Activated CD4-positive, alpha-beta T cell treated with anti-CD3 and anti-CD28 coated beads, Interleukin-2, amount 10 ng/mL, durations not matched to agents 24 days and 14 days (primary cell): ENCODE measurements at regions of chr9 and their contacts with region 1.

Region 1: DNA sequence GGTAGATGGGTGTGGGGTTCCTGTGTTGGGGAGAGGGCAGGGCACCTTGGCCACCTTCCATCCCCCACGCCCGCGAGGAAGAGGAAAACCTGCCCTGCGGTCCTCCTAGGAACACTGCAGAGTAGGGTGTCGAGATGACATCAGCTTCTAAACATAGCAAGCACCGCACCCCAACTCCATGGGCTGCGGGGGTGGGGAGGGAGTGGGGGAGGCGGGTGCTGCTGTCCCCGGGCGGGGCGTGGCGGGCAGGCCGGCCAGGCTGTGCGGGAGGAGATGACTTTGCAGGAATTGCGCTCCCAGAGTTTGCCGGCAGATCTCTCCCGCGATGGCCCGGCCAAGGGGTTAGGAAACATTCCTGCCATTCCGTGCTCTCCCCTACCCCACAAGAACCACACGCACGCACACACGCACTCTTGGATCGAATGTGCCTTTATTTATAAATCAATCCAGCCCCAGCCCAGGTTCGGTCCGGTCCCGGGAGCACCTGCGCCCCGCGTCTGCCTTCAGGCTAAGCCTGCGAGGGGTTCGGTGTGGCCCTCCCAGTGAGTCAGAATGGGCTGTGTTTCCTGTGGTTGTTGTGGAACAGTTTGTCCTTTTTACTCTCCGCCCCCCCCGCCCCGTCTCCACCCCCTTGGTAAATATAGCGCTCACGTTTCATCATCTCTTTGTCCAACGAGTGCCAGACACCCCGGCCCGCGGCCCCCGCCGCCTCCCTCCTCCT is 5.2 kb upstream of the KLF9 start:
- DNase-seq: peak; percentile 93
- H3K4me3 Mint-ChIP-seq: peak overlapping the region; percentile 89
- H3K27ac Mint-ChIP-seq: peak overlapping the region; percentile 97
- H3K4me1 Mint-ChIP-seq: peaks cover 46% of the 10 kb centered on the region
- H3K27me3 Mint-ChIP-seq: no peaks in the 10 kb centered on the region

Region 2: GRCh38 chr9:70258692-70259511 is 160.8 kb before region 1 on chr9 and contains the start of gene SMC5:
- intact Hi-C with region 1: loop called (anchors 1 kb)
- DNase-seq: peak; percentile 98
- H3K4me3 Mint-ChIP-seq: peak within 1 kb of the TSS; percentile 91
- H3K27ac Mint-ChIP-seq: peak within 1 kb of the TSS; percentile 85
- H3K4me1 Mint-ChIP-seq: peaks cover 49% of the 10 kb centered on the region
- H3K27me3 Mint-ChIP-seq: peaks cover 11% of the 10 kb centered on the region
- total RNA-seq, gene SMC5: 47.0 and 50.7 TPM in 2 replicates

Region 3: GRCh38 chr9:70340572-70340971 is 79.1 kb before region 1 on chr9:
- intact Hi-C with region 1: no loop called
- DNase-seq: no peak
- H3K4me3 Mint-ChIP-seq: no peak overlapping the region
- H3K27ac Mint-ChIP-seq: no peak overlapping the region
- H3K4me1 Mint-ChIP-seq: peaks cover 4% of the 10 kb centered on the region
- H3K27me3 Mint-ChIP-seq: no peaks in the 10 kb centered on the region

Region 4: GRCh38 chr9:70406434-70406862 is 13.3 kb before region 1 on chr9:
- intact Hi-C with region 1: loop called (anchors 2 kb)
- DNase-seq: peak; percentile 75
- H3K4me3 Mint-ChIP-seq: peak overlapping the region; percentile 79
- H3K27ac Mint-ChIP-seq: peak overlapping the region; percentile 90
- H3K4me1 Mint-ChIP-seq: peaks cover 58% of the 10 kb centered on the region
- H3K27me3 Mint-ChIP-seq: no peaks in the 10 kb centered on the region

Region 5: GRCh38 chr9:70466976-70467561 is 47.4 kb after region 1 on chr9:
- intact Hi-C with region 1: loop called (anchors 1 kb)
- DNase-seq: no peak
- H3K4me3 Mint-ChIP-seq: peak overlapping the region; percentile 14
- H3K27ac Mint-ChIP-seq: peak overlapping the region; percentile 77
- H3K4me1 Mint-ChIP-seq: peaks cover 39% of the 10 kb centered on the region
- H3K27me3 Mint-ChIP-seq: no peaks in the 10 kb centered on the region

Region 6: DNA sequence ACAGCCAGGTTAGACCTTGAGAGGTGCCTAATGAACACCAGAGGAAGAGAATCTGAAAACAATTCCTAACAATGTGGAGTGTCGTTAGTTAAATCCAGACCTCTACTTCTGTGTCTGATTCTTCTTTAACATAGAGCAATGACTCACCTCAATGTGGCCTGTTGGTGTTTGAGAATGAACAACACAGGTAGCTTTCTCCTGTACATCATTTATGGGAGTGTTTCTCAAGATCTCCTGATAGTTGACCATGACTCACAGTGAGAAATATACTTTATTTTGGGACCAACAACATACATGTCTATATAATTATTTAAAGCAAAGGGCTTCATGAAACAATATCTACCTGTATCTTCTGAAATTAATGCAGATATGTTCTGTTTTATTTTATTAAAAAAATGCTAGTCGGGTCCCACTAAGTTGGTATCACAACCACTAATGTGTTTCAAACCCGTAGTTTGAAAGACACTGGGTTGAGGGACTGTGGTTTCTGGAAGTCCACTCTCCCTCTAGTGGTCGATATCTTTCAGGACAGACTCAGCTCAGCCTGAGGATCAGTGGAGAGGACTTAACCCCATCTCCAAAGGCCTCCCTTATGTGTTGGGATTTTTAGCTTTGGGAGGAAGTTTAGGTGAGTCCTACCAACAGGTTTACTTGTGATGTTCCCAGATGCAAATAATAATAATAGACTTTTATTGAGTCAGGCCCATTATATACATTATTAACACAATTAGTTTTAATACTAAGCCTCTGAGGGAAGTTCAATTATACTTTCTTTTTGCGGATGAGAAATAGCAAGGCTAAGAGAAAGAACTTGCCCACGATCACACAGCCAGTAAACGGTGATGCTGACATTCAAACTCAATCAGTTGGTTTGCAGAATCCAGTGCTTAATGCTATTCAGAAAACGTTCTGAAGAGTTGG is 64.8 kb after region 1 on chr9:
- intact Hi-C with region 1: loop called (anchors 5 kb)
- DNase-seq: peak; percentile 60
- H3K4me3 Mint-ChIP-seq: no peak overlapping the region
- H3K27ac Mint-ChIP-seq: no peak overlapping the region
- H3K4me1 Mint-ChIP-seq: peaks cover 5% of the 10 kb centered on the region
- H3K27me3 Mint-ChIP-seq: no peaks in the 10 kb centered on the region

Region 7: DNA sequence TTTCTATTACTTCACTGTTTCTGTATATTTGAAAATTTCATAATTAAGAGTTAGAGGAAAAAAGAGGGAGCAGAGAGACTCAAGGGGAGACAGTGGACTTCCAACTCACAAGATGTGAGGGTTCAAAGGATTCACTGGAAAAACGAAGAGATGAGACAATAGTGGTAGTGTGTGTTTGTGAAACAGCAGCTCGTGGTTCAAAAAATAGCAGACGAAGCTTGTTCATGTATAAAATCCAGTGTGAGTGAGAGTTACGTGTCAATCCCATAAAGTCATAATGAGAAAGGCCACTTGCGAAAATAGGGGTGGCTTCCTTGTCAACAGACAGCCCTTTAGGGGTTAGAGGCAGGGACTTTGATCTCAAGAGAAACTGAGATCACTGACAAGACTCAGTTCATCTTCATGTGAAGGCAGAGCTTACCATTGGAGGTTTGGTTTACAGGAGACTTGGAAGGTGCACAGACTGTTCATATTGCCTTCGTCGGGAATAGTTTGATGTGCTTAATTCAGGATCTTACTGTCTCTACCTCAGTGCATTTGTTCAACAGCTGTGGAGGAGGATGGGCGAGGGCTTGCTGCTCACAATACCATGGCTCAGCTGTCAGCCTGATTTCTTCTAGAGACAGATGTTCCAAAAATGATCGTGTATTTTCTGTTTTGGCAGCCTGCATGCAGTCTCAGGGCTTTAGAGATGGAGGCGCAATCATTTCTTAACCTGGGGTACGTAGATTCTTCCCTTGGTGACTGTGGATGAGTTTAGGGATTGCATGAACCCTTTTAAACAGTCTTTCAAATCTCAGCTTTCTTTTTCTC is 100.4 kb after region 1 on chr9:
- intact Hi-C with region 1: loop called (anchors 1 kb)
- DNase-seq: peak; percentile 67
- H3K4me3 Mint-ChIP-seq: peak overlapping the region; percentile 69
- H3K27ac Mint-ChIP-seq: peak overlapping the region; percentile 85
- H3K4me1 Mint-ChIP-seq: peaks cover 28% of the 10 kb centered on the region
- H3K27me3 Mint-ChIP-seq: no peaks in the 10 kb centered on the region

Region 8: DNA sequence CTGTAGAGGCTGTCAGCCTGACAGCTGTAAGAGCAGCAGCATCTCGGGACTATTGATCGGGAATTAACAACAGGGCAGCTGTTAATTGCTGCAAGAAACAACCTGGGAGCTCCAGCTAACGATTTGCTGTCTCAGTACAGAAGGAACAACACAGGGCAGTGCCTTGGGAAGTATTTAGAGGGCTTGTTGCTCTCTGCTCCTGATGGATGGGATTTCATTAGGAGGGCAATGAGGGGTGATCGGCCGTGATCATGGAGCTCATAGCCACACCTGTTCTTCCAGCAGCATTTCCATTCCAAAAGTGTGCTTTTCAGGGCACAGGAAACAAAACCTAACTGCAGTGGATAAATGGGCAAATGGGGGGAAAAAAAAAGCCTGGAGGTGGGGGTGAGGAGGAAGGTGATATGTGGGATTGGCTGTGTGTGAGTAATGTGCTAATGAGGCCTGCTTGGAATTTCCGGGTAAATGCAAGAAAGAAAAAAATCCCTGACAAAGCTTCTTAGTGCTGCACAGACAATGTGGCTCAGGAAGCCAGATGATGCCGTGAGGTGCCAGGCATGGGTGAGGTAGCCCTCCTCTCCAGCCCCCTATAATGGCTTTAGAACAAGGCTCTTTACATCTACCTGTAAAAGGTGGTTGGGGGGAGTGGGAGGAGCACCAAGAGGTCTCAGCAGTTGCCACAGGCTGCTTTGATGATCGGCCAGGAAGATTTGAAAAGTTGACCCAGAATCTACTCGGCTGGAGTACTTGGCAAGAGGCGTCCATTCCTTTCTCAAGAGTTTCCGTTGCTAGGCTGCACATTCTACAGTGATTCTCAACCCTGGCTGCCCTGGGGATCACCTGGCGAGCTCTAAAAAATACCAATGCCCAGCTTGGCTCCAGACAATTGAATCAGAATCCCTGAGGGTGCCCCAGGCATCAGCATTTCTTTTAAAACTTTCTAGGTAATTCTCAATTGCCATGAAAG is 134.3 kb after region 1 on chr9:
- intact Hi-C with region 1: no loop called
- DNase-seq: no peak
- H3K4me3 Mint-ChIP-seq: no peak overlapping the region
- H3K27ac Mint-ChIP-seq: no peak overlapping the region
- H3K4me1 Mint-ChIP-seq: peaks cover 25% of the 10 kb centered on the region
- H3K27me3 Mint-ChIP-seq: no peaks in the 10 kb centered on the region

Region 9: DNA sequence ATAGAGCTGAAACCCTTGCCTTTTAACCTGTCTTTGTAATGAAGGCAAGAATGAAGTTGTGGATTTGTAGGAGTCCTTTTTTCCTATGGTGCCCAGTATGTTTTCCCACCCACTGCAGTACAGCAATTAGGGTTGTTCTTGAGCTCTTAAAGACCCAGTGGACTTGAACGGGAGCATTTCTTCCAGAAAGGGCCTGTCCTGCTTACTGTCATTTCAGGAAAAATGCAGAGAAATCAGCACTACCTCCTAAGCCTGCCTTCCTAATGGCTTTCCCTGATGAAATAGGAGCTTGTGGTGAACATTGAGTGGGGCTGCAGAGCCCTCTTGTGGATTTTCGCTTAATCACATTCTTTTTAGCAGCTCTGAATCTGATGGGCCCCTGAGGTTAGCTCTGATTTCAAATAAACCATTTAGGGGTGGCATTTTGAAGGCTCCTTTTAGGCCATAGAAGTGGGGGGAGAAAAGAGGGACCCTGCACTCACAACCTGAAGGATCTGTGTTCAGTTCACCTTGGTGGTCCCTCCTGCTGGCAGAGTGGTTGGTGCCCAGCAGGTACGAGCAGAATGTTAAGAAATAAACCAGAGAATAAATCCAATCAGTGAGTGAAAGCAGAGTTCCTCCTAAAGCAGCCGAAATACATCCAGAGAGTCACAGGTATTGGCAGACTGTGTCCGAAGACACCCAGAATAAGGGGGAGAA is 182.8 kb after region 1 on chr9:
- intact Hi-C with region 1: loop called (anchors 1 kb)
- DNase-seq: peak; percentile 85
- H3K4me3 Mint-ChIP-seq: no peak overlapping the region
- H3K27ac Mint-ChIP-seq: no peak overlapping the region
- H3K4me1 Mint-ChIP-seq: peaks cover 5% of the 10 kb centered on the region
- H3K27me3 Mint-ChIP-seq: no peaks in the 10 kb centered on the region